Colonic mucosa (tissue), 4 donors: ENCODE measurements at regions of chr1 and their contacts with region 1.

Region 1: GRCh38 chr1:112882271-112882744 is 73.7 kb downstream of the SLC16A1 start:
- DNase-seq: no peak
- H3K4me3 ChIP-seq: no peak overlapping the region
- H3K27ac ChIP-seq: peak overlapping the region; percentile 24
- H3K4me1 ChIP-seq: peaks cover 6% of the 10 kb centered on the region
- H3K27me3 ChIP-seq: no peaks in the 10 kb centered on the region
- CTCF ChIP-seq: no peak

Region 2: GRCh38 chr1:112715264-112716053 is 166.8 kb before region 1 on chr1 and contains the start of gene PPM1J:
- intact Hi-C with region 1: loop called (anchors 5 kb)
- DNase-seq: peak; percentile 100
- H3K4me3 ChIP-seq: peak within 1 kb of the TSS; percentile 81
- H3K27ac ChIP-seq: peak within 1 kb of the TSS; percentile 23
- H3K4me1 ChIP-seq: peaks cover 5% of the 10 kb centered on the region
- H3K27me3 ChIP-seq: no peaks in the 10 kb centered on the region
- CTCF ChIP-seq: no peak
- total RNA-seq, gene PPM1J: 0.80 to 1.0 TPM

Region 3: DNA sequence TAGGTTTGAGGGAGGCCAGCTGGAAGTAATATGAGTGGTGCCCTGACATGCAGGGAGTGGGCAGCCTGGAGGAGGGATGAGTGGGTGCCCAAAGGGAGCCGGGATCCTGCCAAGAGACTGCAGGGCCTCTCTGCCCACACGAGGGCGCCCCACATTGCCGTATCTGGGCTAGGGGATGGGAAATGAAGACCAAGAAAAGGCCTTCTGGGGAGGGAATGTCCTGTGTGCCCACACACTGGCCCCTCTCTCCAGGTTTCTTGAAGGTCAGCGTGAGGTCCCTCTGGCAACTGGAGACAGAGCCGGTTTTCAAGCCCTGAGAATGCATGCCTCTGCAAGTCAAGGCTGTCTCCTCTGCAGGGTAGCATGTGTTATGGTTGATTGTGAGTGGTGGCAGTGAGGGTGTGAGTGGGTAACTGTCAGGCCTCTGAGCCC is 73.0 kb before region 1 on chr1:
- intact Hi-C with region 1: loop called (anchors 2 kb)
- DNase-seq: peak; percentile 85
- H3K4me3 ChIP-seq: no peak overlapping the region
- H3K27ac ChIP-seq: no peak overlapping the region
- H3K4me1 ChIP-seq: peaks cover 3% of the 10 kb centered on the region
- H3K27me3 ChIP-seq: no peaks in the 10 kb centered on the region
- CTCF ChIP-seq: peak; percentile 88

Region 4: DNA sequence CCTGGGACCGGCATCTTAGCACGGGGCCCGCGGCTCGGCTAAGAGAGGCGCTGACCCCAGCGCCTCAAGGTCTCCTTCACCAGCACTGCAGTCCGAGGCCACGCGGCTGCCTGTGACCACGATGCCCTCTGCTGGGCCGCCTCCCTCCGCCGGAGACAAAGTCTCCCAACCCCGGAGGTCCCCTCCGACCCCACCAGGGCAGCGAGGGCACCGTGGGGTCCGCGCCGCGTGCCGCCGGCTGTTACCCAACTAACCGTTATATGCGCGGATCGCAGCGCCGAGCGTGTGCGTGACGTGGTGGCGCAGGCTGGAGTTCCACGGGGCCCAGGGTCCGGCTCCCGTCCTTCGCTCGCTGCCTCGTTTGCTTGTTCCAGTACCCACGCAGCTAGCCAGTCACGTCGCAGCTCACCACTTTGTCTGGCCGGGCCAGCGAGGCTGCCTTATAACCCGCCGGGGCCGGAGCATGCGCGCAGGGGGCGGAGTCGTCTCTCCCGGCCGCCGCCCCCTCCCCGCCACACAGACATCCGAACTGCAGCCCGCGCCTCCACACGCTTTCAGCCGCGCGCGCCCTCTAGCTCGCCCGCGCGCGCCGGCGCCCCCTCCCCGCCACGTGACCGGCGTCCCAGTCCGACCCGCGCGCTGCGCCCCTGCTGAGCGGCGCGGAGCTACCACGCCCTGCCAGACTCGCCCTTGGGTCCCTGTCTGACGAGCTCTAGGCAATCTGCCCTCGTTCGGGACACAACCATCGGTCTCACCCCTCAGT is 73.7 kb after region 1 on chr1 and contains the start of gene SLC16A1:
- intact Hi-C with region 1: loop called (anchors 5 kb)
- DNase-seq: peak; percentile 90
- H3K4me3 ChIP-seq: peak within 1 kb of the TSS; percentile 66
- H3K27ac ChIP-seq: peak within 1 kb of the TSS; percentile 78
- H3K4me1 ChIP-seq: no peaks in the 10 kb centered on the region
- H3K27me3 ChIP-seq: no peaks in the 10 kb centered on the region
- CTCF ChIP-seq: peak; percentile 28
- total RNA-seq, gene SLC16A1: 71.8 to 92.4 TPM

Region 5: DNA sequence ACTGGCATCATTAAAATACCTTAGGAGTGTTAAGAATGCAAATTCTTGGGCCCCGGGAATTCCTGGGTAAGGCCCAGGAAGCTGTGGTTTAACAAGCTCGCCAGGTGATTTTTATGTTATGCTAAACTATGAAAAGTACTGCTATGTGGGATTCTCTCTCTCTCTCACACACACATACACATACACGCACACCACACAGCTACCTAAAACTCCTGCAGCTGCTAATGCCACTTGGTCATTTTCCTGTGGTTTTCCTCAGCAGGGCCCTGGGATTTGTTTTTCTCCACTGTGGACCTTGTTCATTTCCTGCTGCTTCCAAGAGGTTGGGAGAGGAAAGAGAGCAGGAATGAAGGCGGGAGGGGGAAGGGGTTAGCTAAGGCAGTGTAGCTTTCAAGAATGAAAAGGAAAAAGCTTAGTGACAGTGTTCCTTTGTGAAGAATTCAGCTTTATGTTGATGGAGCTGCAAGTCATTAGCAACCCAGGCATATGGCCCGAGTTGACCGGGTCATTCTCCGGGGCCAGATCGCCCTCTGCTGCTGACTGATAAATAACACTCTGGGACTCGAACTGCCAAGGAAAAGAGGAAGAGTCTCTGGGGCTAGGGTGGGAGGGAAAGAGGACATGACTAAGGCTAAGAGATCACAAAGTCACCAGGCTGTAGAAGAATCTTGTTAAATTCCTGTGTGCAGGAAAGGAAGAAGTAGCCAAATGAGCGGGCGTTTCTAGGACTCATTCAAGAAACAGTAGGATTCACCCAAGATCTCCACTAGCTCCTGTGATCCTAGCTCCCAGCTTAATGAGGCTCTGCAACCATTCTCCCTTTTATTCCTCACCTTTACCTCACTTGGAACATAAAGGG is 160.2 kb after region 1 on chr1:
- intact Hi-C with region 1: loop called (anchors 2 kb)
- DNase-seq: peak; percentile 83
- H3K4me3 ChIP-seq: no peak overlapping the region
- H3K27ac ChIP-seq: peak overlapping the region; percentile 70
- H3K4me1 ChIP-seq: peaks cover 5% of the 10 kb centered on the region
- H3K27me3 ChIP-seq: no peaks in the 10 kb centered on the region
- CTCF ChIP-seq: peak; percentile 47